ENCODE measurements at regions of chr17 and their contacts with region 1.

Region 1: GRCh38 chr17:46212634-46213435 is 19.6 kb upstream of the KANSL1 start:
- DNase-seq: peak; percentile 83
- H3K4me3 ChIP-seq: no peak overlapping the region
- H3K27ac ChIP-seq: no peak overlapping the region
- H3K4me1 ChIP-seq: no peaks in the 10 kb centered on the region
- H3K27me3 ChIP-seq: no peaks in the 10 kb centered on the region
- CTCF ChIP-seq: peak; percentile 63 to 71
- POLR2A ChIP-seq: no peak

Region 2: GRCh38 chr17:45394913-45395568 is 817.8 kb before region 1 on chr17:
- CTCF ChIA-PET with region 1: no interaction called
- POLR2A ChIA-PET with region 1: no interaction called
- dilution Hi-C with region 1: no loop called
- intact Hi-C with region 1: no loop called
- DNase-seq: peak; percentile 78
- H3K4me3 ChIP-seq: no peak overlapping the region
- H3K27ac ChIP-seq: no peak overlapping the region
- H3K4me1 ChIP-seq: no peaks in the 10 kb centered on the region
- H3K27me3 ChIP-seq: no peaks in the 10 kb centered on the region
- CTCF ChIP-seq: peak; percentile 62 to 78
- POLR2A ChIP-seq: no peak

Region 3: DNA sequence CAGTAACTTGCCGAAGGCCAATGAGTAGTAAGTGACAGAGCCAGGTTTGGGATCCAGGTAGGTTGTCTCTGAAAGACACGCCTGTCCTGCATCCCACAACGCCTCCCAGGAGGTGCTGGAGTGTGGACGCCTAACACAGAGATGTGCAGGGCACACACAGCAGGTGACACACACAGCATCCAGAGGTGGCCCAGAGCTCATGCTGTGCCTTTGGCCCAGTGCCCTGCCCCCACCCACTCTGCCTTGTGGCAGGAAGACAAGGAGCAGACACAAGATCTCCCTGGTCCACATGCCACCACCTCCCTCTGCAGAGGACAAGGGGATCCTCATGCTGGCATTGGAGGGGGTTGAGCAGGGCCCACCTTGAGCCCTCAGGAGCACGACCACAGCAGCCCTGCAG is 228.5 kb before region 1 on chr17:
- CTCF ChIA-PET with region 1: no interaction called
- POLR2A ChIA-PET with region 1: no interaction called
- dilution Hi-C with region 1: no loop called
- intact Hi-C with region 1: no loop called
- DNase-seq: no peak
- H3K4me3 ChIP-seq: no peak overlapping the region
- H3K27ac ChIP-seq: no peak overlapping the region
- H3K4me1 ChIP-seq: no peaks in the 10 kb centered on the region
- H3K27me3 ChIP-seq: peaks cover 0 to 2% of the 10 kb centered on the region in 2 experiments
- CTCF ChIP-seq: no peak
- POLR2A ChIP-seq: no peak

Region 4: DNA sequence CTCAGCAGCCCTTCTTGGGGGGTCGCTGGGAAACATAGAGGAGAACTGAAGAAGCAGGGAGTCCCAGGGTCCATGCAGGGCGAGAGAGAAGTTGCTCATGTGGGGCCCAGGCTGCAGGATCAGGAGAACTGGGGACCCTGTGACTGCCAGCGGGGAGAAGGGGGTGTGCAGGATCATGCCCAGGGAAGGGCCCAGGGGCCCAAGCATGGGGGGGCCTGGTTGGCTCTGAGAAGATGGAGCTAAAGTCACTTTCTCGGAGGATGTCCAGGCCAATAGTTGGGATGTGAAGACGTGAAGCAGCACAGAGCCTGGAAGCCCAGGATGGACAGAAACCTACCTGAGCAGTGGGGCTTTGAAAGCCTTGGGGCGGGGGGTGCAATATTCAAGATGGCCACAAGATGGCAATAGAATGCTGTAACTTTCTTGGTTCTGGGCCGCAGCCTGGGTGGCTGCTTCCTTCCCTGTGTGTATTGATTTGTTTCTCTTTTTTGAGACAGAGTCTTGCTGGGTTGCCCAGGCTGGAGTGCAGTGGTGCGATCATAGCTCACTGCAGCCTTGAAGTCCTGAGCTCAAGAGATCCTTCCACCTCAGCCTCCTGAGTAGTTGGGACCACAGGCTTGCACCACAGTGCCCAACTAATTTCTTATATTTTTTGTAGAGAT is 210.4 kb before region 1 on chr17:
- CTCF ChIA-PET with region 1: interaction called, 50 read pairs
- POLR2A ChIA-PET with region 1: no interaction called
- dilution Hi-C with region 1: no loop called
- intact Hi-C with region 1: loop called (anchors 1 kb)
- DNase-seq: peak; percentile 60
- H3K4me3 ChIP-seq: no peak overlapping the region
- H3K27ac ChIP-seq: no peak overlapping the region
- H3K4me1 ChIP-seq: no peaks in the 10 kb centered on the region
- H3K27me3 ChIP-seq: no peaks in the 10 kb centered on the region
- CTCF ChIP-seq: peak; percentile 79 to 81
- POLR2A ChIP-seq: no peak

Region 5: DNA sequence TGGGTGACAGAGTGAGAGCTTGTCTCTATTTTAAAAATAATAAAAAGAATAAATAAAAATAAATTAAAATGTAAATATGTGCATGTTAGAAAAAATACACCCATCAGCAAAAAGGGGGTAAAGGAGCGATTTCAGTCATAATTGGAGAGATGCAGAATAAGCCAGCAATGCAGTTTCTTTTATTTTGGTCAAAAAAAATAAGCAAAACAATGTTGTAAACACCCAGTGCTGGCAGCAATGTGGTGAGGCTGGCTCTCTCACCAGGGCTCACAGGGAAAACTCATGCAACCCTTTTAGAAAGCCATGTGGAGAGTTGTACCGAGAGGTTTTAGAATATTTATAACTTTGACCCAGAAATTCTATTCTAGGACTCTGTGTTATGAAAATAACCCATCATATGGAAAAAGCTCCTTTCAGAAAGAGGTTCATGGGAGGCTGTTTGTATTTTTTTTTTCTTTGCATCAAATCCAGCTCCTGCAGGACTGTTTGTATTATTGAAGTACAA is 205.3 kb before region 1 on chr17:
- CTCF ChIA-PET with region 1: interaction called, 50 read pairs
- POLR2A ChIA-PET with region 1: no interaction called
- dilution Hi-C with region 1: no loop called
- intact Hi-C with region 1: loop called (anchors 1 kb)
- DNase-seq: no peak
- H3K4me3 ChIP-seq: no peak overlapping the region
- H3K27ac ChIP-seq: no peak overlapping the region
- H3K4me1 ChIP-seq: no peaks in the 10 kb centered on the region
- H3K27me3 ChIP-seq: peaks cover 0 to 2% of the 10 kb centered on the region in 2 experiments
- CTCF ChIP-seq: no peak
- POLR2A ChIP-seq: no peak

Region 6: GRCh38 chr17:46020023-46020761 is 192.6 kb before region 1 on chr17:
- CTCF ChIA-PET with region 1: interaction called, 13 read pairs
- POLR2A ChIA-PET with region 1: no interaction called
- dilution Hi-C with region 1: no loop called
- intact Hi-C with region 1: no loop called
- DNase-seq: no peak
- H3K4me3 ChIP-seq: no peak overlapping the region
- H3K27ac ChIP-seq: no peak overlapping the region
- H3K4me1 ChIP-seq: no peaks in the 10 kb centered on the region
- H3K27me3 ChIP-seq: no peaks in the 10 kb centered on the region
- CTCF ChIP-seq: no peak
- POLR2A ChIP-seq: no peak

Region 7: DNA sequence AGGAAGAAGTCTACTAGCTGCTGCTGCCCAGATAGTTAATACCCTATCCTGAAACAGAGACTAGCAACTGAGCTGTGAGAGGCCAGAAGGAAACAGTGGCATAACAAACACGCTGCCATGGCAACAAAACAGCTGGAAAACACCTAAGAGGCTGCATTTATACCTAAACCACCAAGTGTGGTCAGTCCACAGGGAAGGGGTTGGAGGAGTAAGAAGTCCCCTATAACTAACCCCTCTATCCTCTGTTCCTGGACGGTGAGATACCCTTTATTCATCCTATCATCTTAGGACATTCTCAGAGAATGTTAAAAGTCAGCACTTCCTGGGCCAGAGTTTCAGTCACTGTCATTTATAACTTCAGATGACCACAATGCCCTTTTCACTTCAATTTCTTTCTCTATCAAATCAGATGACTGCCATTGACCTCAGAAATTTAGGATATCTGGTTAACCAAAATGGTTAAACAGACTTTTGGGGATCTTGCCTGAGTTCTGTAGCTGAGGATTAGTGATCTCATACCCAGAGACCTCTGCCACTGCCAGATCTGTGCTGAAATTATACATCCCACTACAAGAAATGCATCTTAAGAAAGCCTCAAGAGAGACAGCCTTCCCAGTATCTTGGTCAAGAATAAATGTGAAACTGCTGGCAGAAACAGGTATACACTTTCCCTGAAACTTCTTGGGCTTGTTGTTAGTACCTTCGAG is 177.6 kb before region 1 on chr17:
- CTCF ChIA-PET with region 1: interaction called, 13 read pairs
- POLR2A ChIA-PET with region 1: no interaction called
- dilution Hi-C with region 1: no loop called
- intact Hi-C with region 1: no loop called
- DNase-seq: no peak
- H3K4me3 ChIP-seq: no peak overlapping the region
- H3K27ac ChIP-seq: no peak overlapping the region
- H3K4me1 ChIP-seq: no peaks in the 10 kb centered on the region
- H3K27me3 ChIP-seq: no peaks in the 10 kb centered on the region
- CTCF ChIP-seq: no peak
- POLR2A ChIP-seq: no peak

Region 8: GRCh38 chr17:46199379-46199778 is 13.5 kb before region 1 on chr17:
- CTCF ChIA-PET with region 1: interaction called, 35 read pairs
- POLR2A ChIA-PET with region 1: no interaction called
- dilution Hi-C with region 1: no loop called
- intact Hi-C with region 1: loop called (anchors 1 kb)
- DNase-seq: no peak
- H3K4me3 ChIP-seq: no peak overlapping the region
- H3K27ac ChIP-seq: no peak overlapping the region
- H3K4me1 ChIP-seq: peaks cover 9% of the 10 kb centered on the region
- H3K27me3 ChIP-seq: no peaks in the 10 kb centered on the region
- CTCF ChIP-seq: no peak
- POLR2A ChIP-seq: no peak

Region 9: DNA sequence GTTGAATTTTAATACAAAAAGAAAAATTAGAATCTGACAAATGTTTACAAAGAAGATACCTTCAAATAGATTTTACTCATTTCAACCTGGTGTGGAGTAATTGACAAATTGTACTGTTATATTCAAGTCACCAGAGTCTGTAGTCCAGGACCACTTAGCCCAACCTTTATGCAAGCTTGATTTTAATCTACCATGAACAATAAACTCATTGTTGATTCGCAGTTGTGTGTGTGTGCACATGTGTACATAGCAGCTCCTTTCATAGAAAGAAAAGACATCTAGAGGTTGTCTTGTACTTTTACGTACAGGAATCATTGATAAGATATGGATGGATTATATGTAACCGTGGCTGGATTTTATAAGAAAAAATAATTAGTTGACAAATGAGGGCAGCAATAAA is 61.4 kb after region 1 on chr17:
- CTCF ChIA-PET with region 1: no interaction called
- POLR2A ChIA-PET with region 1: no interaction called
- dilution Hi-C with region 1: no loop called
- intact Hi-C with region 1: no loop called
- DNase-seq: no peak
- H3K4me3 ChIP-seq: no peak overlapping the region
- H3K27ac ChIP-seq: no peak overlapping the region
- H3K4me1 ChIP-seq: no peaks in the 10 kb centered on the region
- H3K27me3 ChIP-seq: peaks cover 6 to 18% of the 10 kb centered on the region in 2 experiments
- CTCF ChIP-seq: no peak
- POLR2A ChIP-seq: no peak

Measured in endothelial cell of umbilical vein (primary cell).